SK-N-SH (cell line): ENCODE measurements at regions of chr10 and their contacts with region 1.

Region 1: GRCh38 chr10:117216611-117217195 is 19.4 kb downstream of the KCNK18 start:
- DNase-seq: peak; percentile 94
- H3K4me3 ChIP-seq: peak overlapping the region; percentile 59 to 66
- H3K27ac ChIP-seq: no peak overlapping the region
- H3K4me1 ChIP-seq: peaks cover 0 to 17% of the 10 kb centered on the region in 2 experiments; a peak in 1 of 4 replicates
- H3K27me3 ChIP-seq: no peaks in the 10 kb centered on the region
- CTCF ChIP-seq: peak; percentile 94
- EP300 ChIP-seq: no peak
- RAD21 ChIP-seq: peak; percentile 90

Region 2: DNA sequence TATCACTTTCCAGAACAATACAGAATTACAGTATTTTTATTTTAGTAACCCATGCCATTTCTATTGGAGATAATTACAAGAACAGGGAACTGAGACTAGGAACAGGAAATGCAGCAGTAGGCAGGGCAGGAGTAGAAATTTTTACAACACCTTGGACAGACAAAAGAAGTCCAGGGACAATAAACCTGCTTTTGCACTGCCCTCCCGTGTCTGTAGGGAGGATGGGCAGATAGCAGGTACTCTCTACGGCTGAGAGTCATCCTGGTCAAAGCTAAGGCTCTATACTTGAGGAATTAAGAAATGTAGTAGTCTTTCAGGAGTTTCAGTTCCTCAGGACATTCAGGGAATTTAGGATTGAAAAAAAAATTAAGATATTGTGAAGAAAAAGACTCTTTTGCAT is 142.1 kb before region 1 on chr10:
- CTCF ChIA-PET with region 1: no interaction called
- POLR2A ChIA-PET with region 1: no interaction called
- DNase-seq: no peak
- H3K4me3 ChIP-seq: no peak overlapping the region
- H3K27ac ChIP-seq: no peak overlapping the region
- H3K4me1 ChIP-seq: no peaks in the 10 kb centered on the region
- H3K27me3 ChIP-seq: no peaks in the 10 kb centered on the region
- CTCF ChIP-seq: 0 out of 2 replicates have a peak, but pooled peaks have one; percentile 19
- EP300 ChIP-seq: no peak
- RAD21 ChIP-seq: peak; percentile 33

Region 3: DNA sequence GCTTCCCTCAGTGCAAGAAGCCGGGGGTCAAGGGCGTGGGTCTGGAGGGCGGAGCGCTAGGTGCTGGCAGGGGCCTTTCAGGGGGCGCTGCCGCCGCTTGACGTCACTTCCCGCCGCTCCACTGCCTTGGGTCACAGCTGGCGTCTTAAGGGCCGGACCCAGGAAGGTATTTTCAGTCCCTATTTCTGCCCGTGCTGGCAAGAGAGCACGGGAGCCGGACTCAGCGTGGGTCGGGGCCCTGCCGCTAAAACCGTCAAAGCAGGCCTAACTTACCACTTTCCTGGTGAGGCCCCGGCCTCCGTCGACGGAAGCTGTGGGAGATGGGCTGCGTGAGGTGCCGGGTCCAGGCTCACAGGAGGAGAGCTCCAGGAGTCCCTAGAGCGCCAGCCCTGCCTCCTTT is 90.7 kb before region 1 on chr10:
- CTCF ChIA-PET with region 1: no interaction called
- POLR2A ChIA-PET with region 1: no interaction called
- DNase-seq: no peak
- H3K4me3 ChIP-seq: no peak overlapping the region
- H3K27ac ChIP-seq: no peak overlapping the region
- H3K4me1 ChIP-seq: no peaks in the 10 kb centered on the region
- H3K27me3 ChIP-seq: peaks cover 28% of the 10 kb centered on the region
- CTCF ChIP-seq: no peak
- EP300 ChIP-seq: no peak
- RAD21 ChIP-seq: no peak

Region 4: GRCh38 chr10:117174439-117175214 is 42.1 kb before region 1 on chr10:
- CTCF ChIA-PET with region 1: interaction called, 11 read pairs
- POLR2A ChIA-PET with region 1: no interaction called
- DNase-seq: peak; percentile 84
- H3K4me3 ChIP-seq: peak overlapping the region; percentile 52 to 64
- H3K27ac ChIP-seq: no peak overlapping the region
- H3K4me1 ChIP-seq: peaks cover 0 to 9% of the 10 kb centered on the region in 2 experiments; a peak in 1 of 4 replicates
- H3K27me3 ChIP-seq: peaks cover 37% of the 10 kb centered on the region
- CTCF ChIP-seq: peak; percentile 89
- EP300 ChIP-seq: no peak
- RAD21 ChIP-seq: peak; percentile 85

Region 5: GRCh38 chr10:117226824-117227451 is 10.2 kb after region 1 on chr10:
- CTCF ChIA-PET with region 1: interaction called, 41 read pairs
- POLR2A ChIA-PET with region 1: no interaction called
- DNase-seq: peak; percentile 61
- H3K4me3 ChIP-seq: peak overlapping the region in 1 of 2 experiments; percentile 25; a peak in 1 of 4 replicates
- H3K27ac ChIP-seq: no peak overlapping the region
- H3K4me1 ChIP-seq: no peaks in the 10 kb centered on the region; a peak in 1 of 4 replicates
- H3K27me3 ChIP-seq: peaks cover 5% of the 10 kb centered on the region; the same call in 1 of the 2 replicates
- CTCF ChIP-seq: peak; percentile 42
- EP300 ChIP-seq: no peak
- RAD21 ChIP-seq: peak; percentile 73

Region 6: DNA sequence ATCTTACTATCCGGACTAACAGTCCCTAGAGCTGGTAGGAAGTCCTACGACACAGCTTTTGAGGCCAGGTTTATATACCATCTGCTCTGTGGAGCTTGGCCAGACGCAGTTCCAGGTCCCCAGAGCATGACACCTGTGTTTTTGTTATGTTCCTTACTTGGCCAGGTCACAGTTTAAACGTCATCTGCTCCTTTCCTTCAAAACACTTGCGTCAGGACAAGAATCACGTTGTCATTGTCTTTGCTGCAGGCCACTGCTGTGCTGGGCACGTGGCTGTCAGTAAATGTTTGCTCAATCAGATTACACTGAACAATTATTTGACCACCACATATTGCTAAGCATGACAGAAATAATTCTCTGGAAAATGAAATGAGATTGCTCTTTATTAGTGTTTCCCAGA is 48.1 kb after region 1 on chr10:
- CTCF ChIA-PET with region 1: interaction called, 18 read pairs
- POLR2A ChIA-PET with region 1: no interaction called
- DNase-seq: no peak
- H3K4me3 ChIP-seq: no peak overlapping the region
- H3K27ac ChIP-seq: peak overlapping the region in 1 of 2 experiments; percentile 51; a peak in 2 of 4 replicates
- H3K4me1 ChIP-seq: peaks cover 0 to 25% of the 10 kb centered on the region in 2 experiments; a peak in 1 of 4 replicates
- H3K27me3 ChIP-seq: no peaks in the 10 kb centered on the region; the same call in 1 of the 2 replicates
- CTCF ChIP-seq: no peak
- EP300 ChIP-seq: no peak
- RAD21 ChIP-seq: no peak

Region 7: DNA sequence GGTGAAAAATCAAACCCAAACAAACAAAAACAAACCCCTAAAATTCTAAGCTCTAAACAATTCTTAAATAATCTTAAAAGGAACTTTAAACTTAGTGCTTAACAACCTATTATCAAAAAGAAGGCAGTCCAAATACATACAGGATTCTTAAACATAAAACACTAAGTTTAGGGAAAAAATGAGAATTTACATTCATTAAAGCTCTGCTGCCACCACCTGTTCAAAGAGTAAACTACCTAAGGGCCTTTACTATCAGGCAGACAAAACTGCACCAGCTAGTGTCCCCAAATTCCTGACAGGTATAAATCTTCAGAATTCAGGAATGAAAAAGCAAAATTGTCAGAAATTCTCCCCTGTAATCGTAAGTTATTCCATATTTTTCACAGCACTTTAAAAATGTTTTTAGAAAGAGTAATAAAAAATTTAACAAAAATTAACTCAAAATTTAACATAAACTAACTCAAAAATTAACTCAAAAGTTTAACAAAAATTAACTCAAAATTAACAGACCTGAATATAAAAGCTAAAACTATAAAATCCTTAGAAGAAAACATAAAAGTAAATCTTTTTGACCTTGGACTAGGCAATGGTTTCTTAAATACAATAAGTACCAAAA is 103.5 kb after region 1 on chr10:
- CTCF ChIA-PET with region 1: interaction called, 534 read pairs
- POLR2A ChIA-PET with region 1: interaction called, 4 read pairs
- DNase-seq: peak; percentile 23
- H3K4me3 ChIP-seq: no peak overlapping the region; a peak in 1 of 4 replicates
- H3K27ac ChIP-seq: no peak overlapping the region
- H3K4me1 ChIP-seq: no peaks in the 10 kb centered on the region
- H3K27me3 ChIP-seq: no peaks in the 10 kb centered on the region
- CTCF ChIP-seq: peak; percentile 72
- EP300 ChIP-seq: no peak
- RAD21 ChIP-seq: peak; percentile 79

Region 8: GRCh38 chr10:117353684-117354083 is 137.0 kb after region 1 on chr10:
- CTCF ChIA-PET with region 1: interaction called, 16 read pairs
- POLR2A ChIA-PET with region 1: no interaction called
- DNase-seq: no peak
- H3K4me3 ChIP-seq: no peak overlapping the region
- H3K27ac ChIP-seq: no peak overlapping the region
- H3K4me1 ChIP-seq: no peaks in the 10 kb centered on the region; a peak in 1 of 4 replicates
- H3K27me3 ChIP-seq: no peaks in the 10 kb centered on the region
- CTCF ChIP-seq: no peak
- EP300 ChIP-seq: no peak
- RAD21 ChIP-seq: no peak

Region 9: DNA sequence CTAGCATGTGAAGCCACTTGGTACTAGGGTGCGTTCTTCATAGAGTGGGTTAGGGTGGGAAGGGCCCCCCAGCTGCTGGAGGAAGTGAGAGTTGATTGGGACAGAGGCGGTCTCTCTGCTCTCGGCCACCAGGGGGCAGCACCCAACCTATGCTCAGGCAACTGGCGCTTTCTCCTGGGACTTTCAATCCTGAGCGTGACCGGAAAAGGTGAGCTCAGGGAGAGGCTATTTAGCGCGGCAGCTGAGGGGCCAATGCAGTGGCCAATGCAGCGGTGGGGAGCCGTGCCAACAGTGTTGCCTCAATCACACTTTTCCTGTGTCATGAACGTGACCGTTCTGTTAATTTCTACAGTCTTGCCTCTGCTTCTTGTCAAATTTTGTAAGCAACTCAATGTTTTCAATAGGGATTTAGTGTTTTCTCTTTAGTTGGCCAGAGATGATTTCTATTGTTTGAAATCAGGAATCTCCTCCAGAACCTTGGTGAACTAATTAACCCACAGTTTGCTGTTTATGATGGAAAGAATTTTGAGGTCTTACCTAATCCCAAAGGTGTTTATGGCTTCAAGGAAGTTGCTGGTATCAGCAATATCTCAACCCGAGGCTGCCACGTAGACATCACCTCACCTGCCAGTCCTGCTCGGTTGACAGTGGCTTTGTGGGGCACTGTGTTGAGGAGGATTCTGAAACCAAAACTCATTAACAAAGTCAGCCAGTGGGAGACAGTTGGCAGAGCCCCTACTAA is 226.4 kb after region 1 on chr10:
- CTCF ChIA-PET with region 1: interaction called, 10 read pairs
- POLR2A ChIA-PET with region 1: no interaction called
- DNase-seq: peak; percentile 76
- H3K4me3 ChIP-seq: no peak overlapping the region; a peak in 1 of 4 replicates
- H3K27ac ChIP-seq: no peak overlapping the region
- H3K4me1 ChIP-seq: no peaks in the 10 kb centered on the region; a peak in 1 of 4 replicates
- H3K27me3 ChIP-seq: no peaks in the 10 kb centered on the region
- CTCF ChIP-seq: peak; percentile 64
- EP300 ChIP-seq: no peak
- RAD21 ChIP-seq: peak; percentile 59